MCF 10A (cell line): ENCODE measurements at regions of chr15 and their contacts with region 1.

Region 1: GRCh38 chr15:76196269-76197231 is 114.7 kb downstream of the ETFA start:
- DNase-seq: peak; percentile 93
- H3K4me3 Mint-ChIP-seq: peak overlapping the region; percentile 36
- H3K27ac Mint-ChIP-seq: peak overlapping the region; percentile 63
- H3K4me1 Mint-ChIP-seq: peaks cover 49% of the 10 kb centered on the region
- H3K27me3 Mint-ChIP-seq: no peaks in the 10 kb centered on the region
- CTCF ChIP-seq: no peak

Region 2: GRCh38 chr15:76217029-76217428 is 20.5 kb after region 1 on chr15:
- CTCF ChIA-PET with region 1: interaction called, 7 read pairs
- POLR2A ChIA-PET with region 1: interaction called, 15 read pairs
- intact Hi-C with region 1: no loop called
- DNase-seq: peak; percentile 88
- H3K4me3 Mint-ChIP-seq: peak overlapping the region; percentile 7
- H3K27ac Mint-ChIP-seq: peak overlapping the region; percentile 16
- H3K4me1 Mint-ChIP-seq: peaks cover 24% of the 10 kb centered on the region
- H3K27me3 Mint-ChIP-seq: no peaks in the 10 kb centered on the region
- CTCF ChIP-seq: no peak

Region 3: DNA sequence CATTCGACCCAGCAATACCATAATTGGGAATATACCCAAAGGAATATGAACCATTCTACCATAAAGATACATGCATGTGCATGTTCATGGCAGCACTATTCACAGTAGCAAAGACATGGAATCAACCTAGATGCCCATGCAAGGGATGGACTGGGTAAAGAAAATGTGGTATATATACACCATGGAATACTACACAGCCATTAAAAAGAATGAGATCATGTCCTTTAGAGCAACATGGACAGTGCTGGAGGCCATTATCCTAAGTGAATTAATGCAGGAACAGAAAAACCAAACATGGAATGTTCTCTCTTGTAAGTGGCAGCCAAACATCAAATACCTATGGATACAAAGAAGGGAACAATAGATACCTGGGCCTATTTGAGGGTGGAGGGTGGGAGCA is 107.4 kb after region 1 on chr15:
- CTCF ChIA-PET with region 1: no interaction called
- POLR2A ChIA-PET with region 1: no interaction called
- intact Hi-C with region 1: no loop called
- DNase-seq: no peak
- H3K4me3 Mint-ChIP-seq: no peak overlapping the region
- H3K27ac Mint-ChIP-seq: no peak overlapping the region
- H3K4me1 Mint-ChIP-seq: peaks cover 7% of the 10 kb centered on the region
- H3K27me3 Mint-ChIP-seq: no peaks in the 10 kb centered on the region
- CTCF ChIP-seq: no peak